ENCODE measurements at regions of chr5 and their contacts with region 1.

Region 1: GRCh38 chr5:71658916-71659662 is 60.0 kb upstream of the CARTPT start:
- DNase-seq: no peak
- H3K4me3 ChIP-seq: no peak overlapping the region
- H3K27ac ChIP-seq: no peak overlapping the region
- H3K4me1 ChIP-seq: no peaks in the 10 kb centered on the region
- H3K27me3 ChIP-seq: no peaks in the 10 kb centered on the region
- CTCF ChIP-seq: peak in 3 of 5 experiments; percentile 23 to 41 (median 28)
- EP300 ChIP-seq: no peak
- POLR2A ChIP-seq: no peak

Region 2: DNA sequence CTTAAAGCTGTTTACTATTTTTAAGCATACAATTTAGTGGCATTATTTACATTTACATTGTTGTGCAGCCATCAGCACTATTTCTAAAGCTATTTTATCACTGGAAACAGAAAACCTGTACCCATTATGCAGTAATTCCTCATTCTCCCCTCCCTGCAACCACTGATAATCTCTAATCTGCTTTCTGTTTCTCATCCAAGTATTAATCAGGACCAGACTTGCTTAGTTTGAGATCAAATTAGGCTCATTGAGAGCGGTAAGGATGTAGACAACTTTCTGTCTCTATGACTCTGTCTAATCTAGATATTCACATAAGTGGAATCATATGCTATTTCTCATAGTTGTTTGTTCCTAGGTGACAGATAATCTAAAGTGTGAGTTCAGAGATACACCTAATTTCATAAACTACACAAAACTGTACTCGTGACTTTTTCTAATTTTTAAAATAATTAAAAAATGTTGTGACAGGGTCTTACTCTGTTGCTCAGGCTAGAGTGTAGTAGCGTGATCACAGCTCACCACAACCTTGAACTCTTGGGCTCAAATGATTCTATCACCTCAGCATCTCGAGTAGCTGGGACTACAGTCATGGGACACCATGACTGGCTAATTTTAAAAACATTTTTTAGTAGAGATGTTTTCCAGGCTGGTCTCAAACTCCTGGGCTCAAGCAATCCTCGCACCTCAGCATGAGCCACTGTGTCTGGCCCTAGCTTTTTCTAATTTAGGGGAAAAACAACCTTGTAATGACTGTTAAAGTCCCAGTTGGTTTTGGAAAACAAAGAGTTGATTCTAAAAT is 166.1 kb before region 1 on chr5:
- in situ Hi-C with region 1: no loop called
- intact Hi-C with region 1: no loop called
- DNase-seq: no peak
- H3K4me3 ChIP-seq: no peak overlapping the region
- H3K27ac ChIP-seq: no peak overlapping the region
- H3K4me1 ChIP-seq: no peaks in the 10 kb centered on the region
- H3K27me3 ChIP-seq: no peaks in the 10 kb centered on the region
- CTCF ChIP-seq: no peak
- EP300 ChIP-seq: no peak
- POLR2A ChIP-seq: no peak

Region 3: GRCh38 chr5:71528206-71528605 is 130.9 kb before region 1 on chr5:
- in situ Hi-C with region 1: no loop called
- intact Hi-C with region 1: loop called (anchors 10 kb)
- DNase-seq: no peak
- H3K4me3 ChIP-seq: no peak overlapping the region
- H3K27ac ChIP-seq: no peak overlapping the region
- H3K4me1 ChIP-seq: no peaks in the 10 kb centered on the region
- H3K27me3 ChIP-seq: no peaks in the 10 kb centered on the region
- CTCF ChIP-seq: no peak
- EP300 ChIP-seq: no peak
- POLR2A ChIP-seq: no peak

Region 4: GRCh38 chr5:71757590-71758543 is 98.8 kb after region 1 on chr5:
- in situ Hi-C with region 1: loop called in 1 of 4 experiments (anchors 10 kb)
- intact Hi-C with region 1: no loop called
- DNase-seq: peak; percentile 65
- H3K4me3 ChIP-seq: no peak overlapping the region
- H3K27ac ChIP-seq: no peak overlapping the region
- H3K4me1 ChIP-seq: peaks cover 0 to 5% (median 0%) of the 10 kb centered on the region in 4 donors
- H3K27me3 ChIP-seq: no peaks in the 10 kb centered on the region
- CTCF ChIP-seq: peak; percentile 63 to 82 (median 78)
- EP300 ChIP-seq: no peak
- POLR2A ChIP-seq: no peak

Region 5: GRCh38 chr5:72063219-72063819 is 404.2 kb after region 1 on chr5:
- in situ Hi-C with region 1: no loop called
- intact Hi-C with region 1: no loop called
- DNase-seq: no peak
- H3K4me3 ChIP-seq: no peak overlapping the region
- H3K27ac ChIP-seq: no peak overlapping the region
- H3K4me1 ChIP-seq: no peaks in the 10 kb centered on the region
- H3K27me3 ChIP-seq: no peaks in the 10 kb centered on the region
- CTCF ChIP-seq: no peak
- EP300 ChIP-seq: no peak
- POLR2A ChIP-seq: no peak

Region 6: DNA sequence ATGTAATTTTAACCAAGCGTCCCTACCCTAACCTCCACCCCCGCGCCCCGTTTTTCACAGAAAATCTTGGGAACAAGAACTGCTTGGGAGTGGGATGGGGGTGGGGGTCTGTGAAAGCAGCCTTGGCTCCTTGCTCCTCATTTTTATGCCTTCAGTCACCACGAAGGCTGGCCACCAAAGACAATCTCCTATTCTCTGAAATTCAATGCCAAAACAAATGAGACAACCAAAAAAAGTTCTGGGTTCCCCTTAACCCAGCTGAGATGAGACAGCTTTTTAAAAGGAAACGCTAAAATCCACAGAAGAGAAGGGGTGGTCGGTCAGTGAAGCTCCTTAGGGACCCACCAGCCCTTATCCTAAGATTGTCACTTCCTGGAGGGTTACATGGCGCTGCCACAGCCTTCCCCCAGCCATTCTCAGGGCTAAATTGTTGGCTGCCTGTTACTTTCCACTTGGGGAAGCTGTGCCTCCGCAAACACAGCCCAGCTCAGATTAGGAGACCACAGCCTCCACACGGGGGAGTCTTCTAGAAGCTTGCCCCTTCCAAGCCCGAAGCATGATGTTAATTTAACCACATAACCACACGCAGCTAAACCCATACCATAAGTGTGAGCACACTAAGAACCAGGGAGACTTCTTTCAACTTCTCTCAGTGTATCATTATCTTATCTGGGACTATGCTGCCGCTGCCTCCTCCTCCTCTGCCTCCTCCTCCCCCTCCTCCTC is 1653.2 kb after region 1 on chr5:
- in situ Hi-C with region 1: no loop called
- intact Hi-C with region 1: no loop called
- DNase-seq: peak; percentile 22
- H3K4me3 ChIP-seq: no peak overlapping the region
- H3K27ac ChIP-seq: no peak overlapping the region
- H3K4me1 ChIP-seq: peaks cover 0 to 5% (median 2%) of the 10 kb centered on the region in 4 donors
- H3K27me3 ChIP-seq: peaks cover 97% of the 10 kb centered on the region
- CTCF ChIP-seq: peak in 1 of 5 experiments; percentile 6
- EP300 ChIP-seq: no peak
- POLR2A ChIP-seq: no peak